ENCODE measurements at regions of chr10 and their contacts with region 1.

Region 1: GRCh38 chr10:13271552-13272163 is 28.2 kb downstream of the PHYH start:
- DNase-seq: peak; percentile 78 to 89 (median 84)
- ATAC-seq: peak; percentile 98
- H3K4me3 ChIP-seq: no peak overlapping the region
- H3K27ac ChIP-seq: peak overlapping the region; percentile 62
- H3K4me1 ChIP-seq: peaks cover 21 to 24% of the 10 kb centered on the region in 2 experiments; a peak in 4 of 5 replicates
- H3K27me3 ChIP-seq: no peaks in the 10 kb centered on the region
- CTCF ChIP-seq: peak; percentile 77 to 91 (median 78)
- EP300 ChIP-seq: no peak
- POLR2A ChIP-seq: no peak
- RAD21 ChIP-seq: peak; percentile 43 to 78

Region 2: GRCh38 chr10:13299437-13300287 is 28.0 kb after region 1 on chr10 and contains the start of gene PHYH:
- CTCF ChIA-PET with region 1: interaction called, 3 read pairs
- POLR2A ChIA-PET with region 1: interaction called, 4 read pairs
- in situ Hi-C with region 1: no loop called
- intact Hi-C with region 1: loop called (anchors 1 kb)
- DNase-seq: peak; percentile 83 to 90 (median 88)
- ATAC-seq: peak; percentile 89
- H3K4me3 ChIP-seq: peak within 1 kb of the TSS; percentile 58
- H3K27ac ChIP-seq: peak within 1 kb of the TSS; percentile 69
- H3K4me1 ChIP-seq: peaks cover 8 to 32% of the 10 kb centered on the region in 2 experiments; a peak in 3 of 5 replicates
- H3K27me3 ChIP-seq: no peaks in the 10 kb centered on the region
- CTCF ChIP-seq: no peak
- EP300 ChIP-seq: no peak; the same call in 1 of the 2 replicates
- POLR2A ChIP-seq: peak; percentile 69
- RAD21 ChIP-seq: no peak
- polyA plus RNA-seq, gene PHYH: 6.3 to 6.9 TPM

Region 3: DNA sequence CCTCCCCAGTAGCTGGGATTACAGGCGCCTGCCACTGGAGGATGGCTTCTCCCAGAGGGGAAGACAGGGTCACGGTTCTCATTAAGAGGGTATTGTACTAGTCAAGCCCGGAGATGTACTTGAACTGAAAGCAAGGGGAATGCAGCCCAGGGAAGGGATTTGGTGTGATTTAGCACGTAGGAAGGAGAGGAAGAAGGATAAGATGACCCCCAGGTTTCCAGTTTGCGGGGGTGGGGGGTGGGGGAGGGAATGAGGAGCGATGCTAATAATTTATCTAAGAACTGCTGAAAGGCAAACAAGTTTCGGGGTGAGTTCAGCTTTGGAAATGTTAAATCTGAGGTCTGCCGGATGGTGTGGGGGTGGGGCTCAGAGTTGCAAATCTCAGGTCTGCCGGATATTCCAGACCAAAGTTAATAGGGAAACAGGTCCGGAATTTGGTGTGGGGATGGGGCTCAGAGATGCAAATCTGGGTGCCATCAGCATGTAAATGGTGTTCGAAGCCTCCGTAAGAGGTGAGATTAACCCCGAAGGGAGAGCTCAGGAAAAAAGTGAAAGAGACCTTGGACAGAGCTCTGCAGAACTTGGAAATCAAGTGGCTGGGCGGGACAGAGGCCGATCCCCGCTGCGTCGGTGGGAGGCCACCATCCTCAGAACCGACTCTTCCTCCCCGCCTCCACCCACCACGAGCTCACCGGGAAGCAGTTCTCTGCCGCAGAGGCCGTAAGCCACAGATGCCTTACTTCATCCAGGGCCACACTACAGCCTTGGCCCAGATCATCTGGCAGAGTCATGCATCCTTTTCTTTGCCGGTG is 78.0 kb after region 1 on chr10:
- CTCF ChIA-PET with region 1: no interaction called
- POLR2A ChIA-PET with region 1: no interaction called
- in situ Hi-C with region 1: no loop called
- intact Hi-C with region 1: loop called (anchors 5 kb)
- DNase-seq: peak; percentile 27 to 41 (median 32)
- ATAC-seq: peak; percentile 7; the same call in 2 of the 3 replicates
- H3K4me3 ChIP-seq: no peak overlapping the region
- H3K27ac ChIP-seq: no peak overlapping the region
- H3K4me1 ChIP-seq: peaks cover 13 to 17% of the 10 kb centered on the region in 2 experiments
- H3K27me3 ChIP-seq: peaks cover 0 to 6% of the 10 kb centered on the region in 2 experiments; a peak in 3 of 5 replicates
- CTCF ChIP-seq: no peak
- EP300 ChIP-seq: no peak
- POLR2A ChIP-seq: no peak
- RAD21 ChIP-seq: no peak